ENCODE measurements at regions of chr10 and their contacts with region 1.

Region 1: GRCh38 chr10:44386546-44387052 is 1.7 kb upstream of the CXCL12 start:
- DNase-seq: peak; percentile 71
- H3K4me3 ChIP-seq: peak overlapping the region in 1 of 2 donors; percentile 26
- H3K27ac ChIP-seq: no peak overlapping the region
- H3K4me1 ChIP-seq: peaks cover 20% of the 10 kb centered on the region
- H3K27me3 ChIP-seq: no peaks in the 10 kb centered on the region
- CTCF ChIP-seq: peak; percentile 77 to 85 (median 80)
- POLR2A ChIP-seq: no peak

Region 2: GRCh38 chr10:43671656-43672531 is 714.7 kb before region 1 on chr10:
- intact Hi-C with region 1: loop called (anchors 5 kb)
- DNase-seq: peak; percentile 75
- H3K4me3 ChIP-seq: no peak overlapping the region
- H3K27ac ChIP-seq: no peak overlapping the region
- H3K4me1 ChIP-seq: peaks cover 6% of the 10 kb centered on the region
- H3K27me3 ChIP-seq: no peaks in the 10 kb centered on the region
- CTCF ChIP-seq: peak; percentile 81 to 89 (median 82)
- POLR2A ChIP-seq: no peak

Region 3: DNA sequence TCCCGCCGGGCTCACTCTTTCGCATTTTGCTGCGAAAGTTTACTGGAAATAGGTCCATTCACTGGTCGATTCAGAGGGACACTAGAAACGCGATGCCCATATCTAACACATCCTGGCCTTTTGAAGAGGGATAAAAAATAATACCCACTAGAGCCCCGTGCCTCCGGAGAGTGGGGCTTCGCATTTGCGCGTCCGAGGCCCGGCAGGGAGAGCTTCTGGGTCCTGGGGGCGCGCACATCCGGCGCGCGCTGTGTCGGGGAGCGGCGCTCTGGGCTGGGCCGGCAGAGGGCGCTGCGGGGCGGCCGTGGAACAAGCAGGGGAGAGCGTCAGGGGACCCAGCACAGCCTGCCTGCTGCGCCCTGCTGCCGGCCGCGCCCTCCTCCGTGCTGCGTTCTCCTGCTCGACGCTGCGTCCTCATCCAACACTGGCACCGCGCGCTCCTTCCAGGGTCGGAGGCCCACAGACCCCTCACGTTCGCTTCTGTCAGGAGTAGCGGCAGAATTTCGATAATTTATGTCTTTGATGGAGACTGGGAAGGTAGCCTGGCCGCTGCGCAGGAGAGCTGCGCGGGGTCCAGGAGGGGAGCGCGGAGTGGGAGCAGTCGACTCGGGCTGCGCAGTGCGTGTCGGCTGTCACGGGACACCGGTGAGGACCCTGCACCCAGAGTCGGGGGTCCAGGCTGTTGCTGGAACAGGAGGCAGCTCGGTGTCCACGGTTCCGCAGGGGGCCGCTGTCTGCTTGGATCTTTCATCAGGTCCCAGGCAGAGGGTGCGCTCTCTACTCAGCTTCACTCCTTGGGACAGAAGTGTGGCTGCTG is 696.4 kb before region 1 on chr10:
- intact Hi-C with region 1: loop called (anchors 5 kb)
- DNase-seq: peak; percentile 90
- H3K4me3 ChIP-seq: peak overlapping the region; percentile 62 to 67
- H3K27ac ChIP-seq: peak overlapping the region in 1 of 2 donors; percentile 75
- H3K4me1 ChIP-seq: peaks cover 7% of the 10 kb centered on the region
- H3K27me3 ChIP-seq: no peaks in the 10 kb centered on the region
- CTCF ChIP-seq: peak; percentile 86 to 90 (median 90)
- POLR2A ChIP-seq: no peak

Region 4: GRCh38 chr10:44102726-44103255 is 283.8 kb before region 1 on chr10:
- intact Hi-C with region 1: no loop called
- DNase-seq: no peak
- H3K4me3 ChIP-seq: no peak overlapping the region
- H3K27ac ChIP-seq: no peak overlapping the region
- H3K4me1 ChIP-seq: no peaks in the 10 kb centered on the region
- H3K27me3 ChIP-seq: no peaks in the 10 kb centered on the region
- CTCF ChIP-seq: no peak
- POLR2A ChIP-seq: no peak

Region 5: GRCh38 chr10:44316187-44316921 is 70.2 kb before region 1 on chr10:
- intact Hi-C with region 1: no loop called
- DNase-seq: peak; percentile 67
- H3K4me3 ChIP-seq: no peak overlapping the region
- H3K27ac ChIP-seq: no peak overlapping the region
- H3K4me1 ChIP-seq: no peaks in the 10 kb centered on the region
- H3K27me3 ChIP-seq: no peaks in the 10 kb centered on the region
- CTCF ChIP-seq: no peak
- POLR2A ChIP-seq: no peak

Region 6: GRCh38 chr10:44857363-44858016 is 470.9 kb after region 1 on chr10:
- intact Hi-C with region 1: loop called (anchors 10 kb)
- DNase-seq: peak; percentile 79
- H3K4me3 ChIP-seq: no peak overlapping the region
- H3K27ac ChIP-seq: no peak overlapping the region
- H3K4me1 ChIP-seq: no peaks in the 10 kb centered on the region
- H3K27me3 ChIP-seq: no peaks in the 10 kb centered on the region
- CTCF ChIP-seq: peak; percentile 85 to 97 (median 92)
- POLR2A ChIP-seq: no peak

Region 7: DNA sequence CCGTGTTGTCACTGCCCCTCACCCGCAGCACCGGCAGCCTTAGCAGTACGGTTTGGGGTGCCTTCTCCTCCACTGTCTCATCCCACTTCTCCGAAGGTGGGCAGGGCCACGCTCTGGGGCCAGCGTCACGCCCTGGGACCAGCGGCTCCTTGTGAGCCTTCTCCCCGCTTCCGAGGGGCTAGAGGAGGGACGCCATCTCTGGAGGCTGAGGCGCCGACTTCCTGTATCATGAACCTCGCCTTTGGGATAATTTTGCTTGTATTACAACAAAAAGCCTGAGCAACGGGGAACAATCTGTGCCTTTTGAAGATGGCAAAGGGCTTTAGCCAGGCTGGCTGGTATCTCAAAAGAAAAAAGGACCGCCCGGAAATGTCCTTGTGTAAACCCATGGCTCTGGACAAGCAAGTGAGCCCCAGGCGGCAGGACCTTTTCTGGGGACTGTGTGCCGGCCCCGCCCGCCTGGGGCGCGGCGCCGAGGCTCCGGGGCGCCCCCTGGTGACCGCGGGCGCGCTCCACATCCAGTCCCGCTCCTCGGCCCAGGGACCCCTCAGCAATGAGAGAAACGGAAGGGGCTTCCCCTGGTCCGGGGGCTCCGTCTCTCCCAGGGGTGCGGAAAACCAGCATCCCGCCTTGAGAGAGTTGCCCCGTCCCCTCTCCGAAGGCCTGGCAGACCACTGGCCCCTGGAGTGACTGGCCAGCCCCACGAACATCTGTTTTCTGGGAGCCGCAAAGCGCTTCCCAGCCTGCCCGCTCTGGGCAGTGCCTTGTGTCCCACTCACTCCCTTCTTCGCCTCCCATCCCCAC is 588.2 kb after region 1 on chr10:
- intact Hi-C with region 1: no loop called
- DNase-seq: peak; percentile 80
- H3K4me3 ChIP-seq: peak overlapping the region; percentile 40 to 48
- H3K27ac ChIP-seq: peak overlapping the region; percentile 61 to 85
- H3K4me1 ChIP-seq: peaks cover 32% of the 10 kb centered on the region
- H3K27me3 ChIP-seq: no peaks in the 10 kb centered on the region
- CTCF ChIP-seq: peak; percentile 86 to 93 (median 90)
- POLR2A ChIP-seq: no peak

Region 8: GRCh38 chr10:45091968-45092367 is 705.4 kb after region 1 on chr10:
- intact Hi-C with region 1: no loop called
- DNase-seq: no peak
- H3K4me3 ChIP-seq: no peak overlapping the region
- H3K27ac ChIP-seq: no peak overlapping the region
- H3K4me1 ChIP-seq: no peaks in the 10 kb centered on the region
- H3K27me3 ChIP-seq: no peaks in the 10 kb centered on the region
- CTCF ChIP-seq: no peak
- POLR2A ChIP-seq: no peak